ENCODE measurements at regions of chr14 and their contacts with region 1.

Region 1: DNA sequence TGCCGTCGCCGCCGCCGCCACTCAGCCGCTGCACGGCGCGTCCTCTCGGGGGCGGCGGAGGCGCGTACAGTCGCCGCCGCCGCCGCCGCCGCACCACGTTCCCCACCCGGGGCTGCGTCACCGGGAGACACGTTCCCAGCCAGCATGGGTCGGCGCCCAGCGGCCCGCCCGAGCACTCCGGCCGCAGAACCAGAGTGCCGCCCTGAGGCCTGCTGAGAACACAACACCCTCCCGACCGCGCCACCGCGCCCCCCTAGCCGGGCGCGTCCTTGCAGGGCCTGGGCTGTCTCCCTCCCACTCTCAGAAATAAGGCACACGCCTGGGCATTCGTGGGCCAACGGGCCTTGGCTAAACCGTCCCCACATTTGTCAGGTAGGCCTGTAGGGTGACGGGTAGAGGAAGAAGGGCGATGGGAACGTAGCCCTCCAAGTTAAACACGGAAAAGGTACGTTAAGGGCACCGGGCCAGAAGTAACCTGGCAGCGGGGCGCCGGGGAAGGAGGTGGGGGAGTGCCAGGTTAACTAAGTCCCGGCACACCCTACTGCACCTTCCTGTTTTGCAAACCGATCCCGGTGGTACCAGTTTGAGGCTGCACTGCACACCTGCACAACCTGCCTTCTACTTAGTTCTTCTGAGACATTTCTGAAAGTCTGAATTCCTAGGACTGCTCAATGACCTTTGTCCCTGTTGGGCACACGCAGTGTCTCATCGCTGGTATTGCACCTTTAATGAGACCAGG is at the start of gene MAP4K5:
- DNase-seq: peak; percentile 83
- ATAC-seq: peak; percentile 94
- H3K4me3 Mint-ChIP-seq: peak within 1 kb of the TSS; percentile 84
- H3K27ac Mint-ChIP-seq: peak within 1 kb of the TSS; percentile 88
- H3K4me1 Mint-ChIP-seq: peaks cover 47% of the 10 kb centered on the region
- H3K27me3 Mint-ChIP-seq: no peaks in the 10 kb centered on the region
- CTCF ChIP-seq: no peak
- total RNA-seq, gene MAP4K5: 32.5 and 34.1 TPM in 2 replicates

Region 2: DNA sequence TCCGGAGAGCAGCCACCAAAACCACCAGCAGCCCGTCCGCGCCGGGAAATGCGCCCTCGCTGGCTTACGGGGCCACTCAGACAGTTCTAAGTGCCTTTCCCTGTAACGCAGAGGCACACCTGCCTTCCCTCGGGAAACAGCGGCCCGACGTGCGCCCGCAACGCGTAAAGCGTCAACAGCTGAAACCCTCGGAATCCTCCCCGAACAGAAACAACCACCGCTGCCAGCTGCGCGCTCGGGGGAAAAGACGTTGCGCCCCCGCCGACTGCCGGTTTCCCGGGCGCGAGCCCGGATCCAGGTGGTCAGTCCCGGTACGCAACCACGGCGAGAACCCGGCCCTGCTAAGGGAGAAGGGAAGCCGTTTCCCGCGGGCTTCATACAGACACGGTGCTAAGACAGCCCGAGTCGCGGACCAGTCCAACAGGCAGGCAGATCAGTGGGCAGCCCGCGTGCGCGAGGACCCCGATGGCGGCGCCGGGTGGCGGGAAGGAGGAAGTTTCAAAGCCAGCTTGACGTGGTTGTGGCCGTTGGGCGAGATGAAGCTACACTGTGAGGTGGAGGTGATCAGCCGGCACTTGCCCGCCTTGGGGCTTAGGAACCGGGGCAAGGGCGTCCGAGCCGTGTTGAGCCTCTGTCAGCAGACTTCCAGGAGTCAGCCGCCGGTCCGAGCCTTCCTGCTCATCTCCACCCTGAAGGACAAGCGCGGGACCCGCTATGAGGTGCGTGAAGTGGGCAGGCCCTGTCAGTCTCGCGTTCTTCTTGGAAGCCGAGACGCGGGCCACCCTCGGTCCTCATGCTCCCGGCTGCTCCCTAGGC is 934.0 kb before region 1 on chr14 and contains the start of gene LRR1:
- CTCF ChIA-PET with region 1: no interaction called
- POLR2A ChIA-PET with region 1: no interaction called
- intact Hi-C with region 1: loop called (anchors 10 kb)
- DNase-seq: peak; percentile 94
- ATAC-seq: peak; percentile 67
- H3K4me3 Mint-ChIP-seq: peak within 1 kb of the TSS; percentile 95
- H3K27ac Mint-ChIP-seq: peak within 1 kb of the TSS; percentile 96
- H3K4me1 Mint-ChIP-seq: peaks cover 60% of the 10 kb centered on the region
- H3K27me3 Mint-ChIP-seq: no peaks in the 10 kb centered on the region
- CTCF ChIP-seq: no peak
- total RNA-seq, gene LRR1: 15.1 and 19.9 TPM in 2 replicates

Region 3: DNA sequence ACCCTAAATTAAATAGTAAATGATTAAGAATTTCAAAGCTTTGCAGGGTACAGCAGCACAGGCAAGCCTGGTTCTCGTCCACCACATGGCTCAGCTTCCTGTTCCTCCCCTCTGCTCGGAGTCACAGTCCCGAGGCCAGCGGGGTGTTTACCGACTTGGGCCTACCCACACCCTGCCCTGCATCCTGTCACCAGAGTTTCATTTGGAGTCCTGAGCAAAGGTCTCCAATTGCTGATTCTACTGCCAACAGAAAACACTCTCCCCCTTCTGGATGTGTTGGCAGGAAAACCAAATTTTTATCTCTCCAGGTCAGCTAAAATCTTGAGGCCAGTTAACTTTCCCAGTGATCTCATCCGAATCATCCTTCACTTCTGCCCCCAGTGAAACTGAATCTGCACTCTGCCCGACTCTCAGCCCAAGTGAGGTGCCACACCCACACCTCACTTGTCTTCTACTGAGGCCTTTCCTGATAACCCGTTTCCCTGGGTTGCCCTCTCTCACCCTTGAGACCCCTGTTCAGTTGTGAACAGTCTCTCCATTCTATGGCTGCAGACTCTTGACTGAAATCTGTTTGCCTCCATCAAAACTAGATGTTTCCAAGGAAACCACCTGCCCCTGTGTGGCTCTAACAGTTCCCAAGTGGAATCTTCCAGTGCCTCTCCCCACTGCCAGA is 487.5 kb before region 1 on chr14:
- CTCF ChIA-PET with region 1: no interaction called
- POLR2A ChIA-PET with region 1: no interaction called
- intact Hi-C with region 1: loop called (anchors 10 kb)
- DNase-seq: no peak
- ATAC-seq: peak; percentile 70
- H3K4me3 Mint-ChIP-seq: peak overlapping the region; percentile 2
- H3K27ac Mint-ChIP-seq: peak overlapping the region; percentile 92
- H3K4me1 Mint-ChIP-seq: peaks cover 71% of the 10 kb centered on the region
- H3K27me3 Mint-ChIP-seq: no peaks in the 10 kb centered on the region
- CTCF ChIP-seq: no peak

Region 4: GRCh38 chr14:50321009-50321660 is 211.5 kb before region 1 on chr14:
- CTCF ChIA-PET with region 1: interaction called, 26 read pairs
- POLR2A ChIA-PET with region 1: no interaction called
- intact Hi-C with region 1: loop called (anchors 1 kb)
- DNase-seq: no peak
- ATAC-seq: peak; percentile 94
- H3K4me3 Mint-ChIP-seq: no peak overlapping the region
- H3K27ac Mint-ChIP-seq: no peak overlapping the region
- H3K4me1 Mint-ChIP-seq: peaks cover 21% of the 10 kb centered on the region
- H3K27me3 Mint-ChIP-seq: no peaks in the 10 kb centered on the region
- CTCF ChIP-seq: peak; percentile 43

Region 5: GRCh38 chr14:50520947-50521815 is 11.5 kb before region 1 on chr14:
- CTCF ChIA-PET with region 1: interaction called, 3 read pairs
- POLR2A ChIA-PET with region 1: no interaction called
- intact Hi-C with region 1: loop called (anchors 1 kb)
- DNase-seq: no peak
- ATAC-seq: peak; percentile 71
- H3K4me3 Mint-ChIP-seq: peak overlapping the region; percentile 2
- H3K27ac Mint-ChIP-seq: peak overlapping the region; percentile 66
- H3K4me1 Mint-ChIP-seq: peaks cover 44% of the 10 kb centered on the region
- H3K27me3 Mint-ChIP-seq: no peaks in the 10 kb centered on the region
- CTCF ChIP-seq: no peak